ENCODE measurements at regions of chrX and their contacts with region 1.

Region 1: GRCh38 chrX:20252381-20253231 is 14.1 kb downstream of the RPS6KA3 start:
- DNase-seq: peak; percentile 42
- ATAC-seq: peak; percentile 75
- H3K4me3 Mint-ChIP-seq: no peak overlapping the region
- H3K27ac Mint-ChIP-seq: no peak overlapping the region
- H3K4me1 Mint-ChIP-seq: peaks cover 45% of the 10 kb centered on the region
- H3K27me3 Mint-ChIP-seq: no peaks in the 10 kb centered on the region
- CTCF ChIP-seq: no peak

Region 2: DNA sequence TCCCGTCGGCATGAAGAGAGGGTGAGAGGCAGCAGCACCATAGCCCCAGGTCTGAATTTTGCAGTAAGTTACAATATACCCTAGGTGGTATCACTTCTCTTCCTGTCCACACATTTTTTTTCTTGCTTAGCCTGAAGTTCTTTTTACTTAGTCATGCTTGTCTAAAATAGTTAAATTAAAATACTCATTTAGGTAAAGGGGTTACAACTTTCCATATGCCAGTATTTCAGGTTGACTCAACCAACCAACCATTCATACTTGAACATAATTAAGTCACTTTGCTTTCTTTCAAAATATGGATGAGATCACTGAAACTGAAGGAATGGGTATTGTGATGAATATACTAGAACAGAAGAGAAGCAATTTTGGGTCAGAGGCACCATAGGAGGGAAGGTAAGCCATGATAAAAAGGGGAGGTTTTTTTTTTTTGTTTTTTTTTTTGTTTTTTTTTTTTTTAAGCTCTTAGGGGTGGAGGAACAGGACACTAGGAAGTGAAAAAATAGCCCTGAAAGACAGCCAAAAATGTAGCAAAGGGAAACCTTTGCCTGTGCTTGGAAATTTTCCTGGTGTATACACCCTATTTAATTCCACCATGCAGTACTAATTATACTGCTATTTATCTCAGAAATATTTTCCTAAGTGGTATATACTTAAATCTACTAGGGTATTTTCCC is 27.7 kb before region 1 on chrX:
- CTCF ChIA-PET with region 1: no interaction called
- POLR2A ChIA-PET with region 1: no interaction called
- intact Hi-C with region 1: loop called (anchors 5 kb)
- DNase-seq: no peak
- ATAC-seq: peak; percentile 72
- H3K4me3 Mint-ChIP-seq: no peak overlapping the region
- H3K27ac Mint-ChIP-seq: peak overlapping the region; percentile 12
- H3K4me1 Mint-ChIP-seq: peaks cover 24% of the 10 kb centered on the region
- H3K27me3 Mint-ChIP-seq: no peaks in the 10 kb centered on the region
- CTCF ChIP-seq: no peak

Region 3: GRCh38 chrX:20329435-20329834 is 76.8 kb after region 1 on chrX:
- CTCF ChIA-PET with region 1: interaction called, 4 read pairs
- POLR2A ChIA-PET with region 1: no interaction called
- intact Hi-C with region 1: loop called (anchors 1 kb)
- DNase-seq: no peak
- ATAC-seq: no peak
- H3K4me3 Mint-ChIP-seq: no peak overlapping the region
- H3K27ac Mint-ChIP-seq: no peak overlapping the region
- H3K4me1 Mint-ChIP-seq: no peaks in the 10 kb centered on the region
- H3K27me3 Mint-ChIP-seq: no peaks in the 10 kb centered on the region
- CTCF ChIP-seq: no peak

Region 4: GRCh38 chrX:21374163-21374993 is 1121.8 kb after region 1 on chrX and contains the start of gene CNKSR2:
- CTCF ChIA-PET with region 1: no interaction called
- POLR2A ChIA-PET with region 1: no interaction called
- intact Hi-C with region 1: no loop called
- DNase-seq: peak; percentile 74
- ATAC-seq: peak; percentile 77
- H3K4me3 Mint-ChIP-seq: peak within 1 kb of the TSS; percentile 92
- H3K27ac Mint-ChIP-seq: peak within 1 kb of the TSS; percentile 86
- H3K4me1 Mint-ChIP-seq: peaks cover 30% of the 10 kb centered on the region
- H3K27me3 Mint-ChIP-seq: no peaks in the 10 kb centered on the region
- CTCF ChIP-seq: no peak
- total RNA-seq, gene CNKSR2: 15.6 and 15.7 TPM in 2 replicates

Region 5: GRCh38 chrX:22095286-22095685 is 1842.7 kb after region 1 on chrX:
- CTCF ChIA-PET with region 1: no interaction called
- POLR2A ChIA-PET with region 1: no interaction called
- intact Hi-C with region 1: no loop called
- DNase-seq: no peak
- ATAC-seq: no peak
- H3K4me3 Mint-ChIP-seq: no peak overlapping the region
- H3K27ac Mint-ChIP-seq: no peak overlapping the region
- H3K4me1 Mint-ChIP-seq: no peaks in the 10 kb centered on the region
- H3K27me3 Mint-ChIP-seq: peaks cover 2% of the 10 kb centered on the region
- CTCF ChIP-seq: no peak